ENCODE measurements at regions of chr19 and their contacts with region 1.

Region 1: GRCh38 chr19:43446746-43447489 is 18.5 kb downstream of the LYPD3 start:
- DNase-seq: peak; percentile 71 to 80
- ATAC-seq: peak in 7 of 8 donors; percentile 72 to 87 (median 87)
- H3K4me3 ChIP-seq: no peak overlapping the region
- H3K27ac ChIP-seq: no peak overlapping the region
- H3K4me1 ChIP-seq: peaks cover 0 to 17% (median 0%) of the 10 kb centered on the region in 9 donors
- H3K27me3 ChIP-seq: no peaks in the 10 kb centered on the region
- CTCF ChIP-seq: peak; percentile 91 to 98 (median 95)

Region 2: GRCh38 chr19:43503501-43504425 is 56.8 kb after region 1 on chr19:
- intact Hi-C with region 1: loop called in 1 of 10 experiments (anchors 5 kb)
- DNase-seq: peak; percentile 98
- ATAC-seq: peak; percentile 98 to 99 (median 99)
- H3K4me3 ChIP-seq: peak overlapping the region; percentile 61 to 89 (median 80)
- H3K27ac ChIP-seq: peak overlapping the region; percentile 55 to 92 (median 86)
- H3K4me1 ChIP-seq: peaks cover 0 to 43% (median 20%) of the 10 kb centered on the region in 9 donors
- H3K27me3 ChIP-seq: no peaks in the 10 kb centered on the region
- CTCF ChIP-seq: peak in 4 of 9 donors; percentile 29 to 52 (median 42)

Region 3: GRCh38 chr19:43519436-43520088 is 72.6 kb after region 1 on chr19:
- intact Hi-C with region 1: loop called (anchors 1 to 2 kb)
- DNase-seq: peak; percentile 69 to 78
- ATAC-seq: peak in 6 of 8 donors; percentile 60 to 79 (median 70)
- H3K4me3 ChIP-seq: no peak overlapping the region
- H3K27ac ChIP-seq: no peak overlapping the region
- H3K4me1 ChIP-seq: peaks cover 0 to 12% (median 2%) of the 10 kb centered on the region in 9 donors
- H3K27me3 ChIP-seq: no peaks in the 10 kb centered on the region
- CTCF ChIP-seq: peak; percentile 78 to 95 (median 90)

Measured in heart right ventricle (tissue), 16 donors.